GM18951 (cell line): ENCODE measurements at regions of chr11 and their contacts with region 1.

Region 1: DNA sequence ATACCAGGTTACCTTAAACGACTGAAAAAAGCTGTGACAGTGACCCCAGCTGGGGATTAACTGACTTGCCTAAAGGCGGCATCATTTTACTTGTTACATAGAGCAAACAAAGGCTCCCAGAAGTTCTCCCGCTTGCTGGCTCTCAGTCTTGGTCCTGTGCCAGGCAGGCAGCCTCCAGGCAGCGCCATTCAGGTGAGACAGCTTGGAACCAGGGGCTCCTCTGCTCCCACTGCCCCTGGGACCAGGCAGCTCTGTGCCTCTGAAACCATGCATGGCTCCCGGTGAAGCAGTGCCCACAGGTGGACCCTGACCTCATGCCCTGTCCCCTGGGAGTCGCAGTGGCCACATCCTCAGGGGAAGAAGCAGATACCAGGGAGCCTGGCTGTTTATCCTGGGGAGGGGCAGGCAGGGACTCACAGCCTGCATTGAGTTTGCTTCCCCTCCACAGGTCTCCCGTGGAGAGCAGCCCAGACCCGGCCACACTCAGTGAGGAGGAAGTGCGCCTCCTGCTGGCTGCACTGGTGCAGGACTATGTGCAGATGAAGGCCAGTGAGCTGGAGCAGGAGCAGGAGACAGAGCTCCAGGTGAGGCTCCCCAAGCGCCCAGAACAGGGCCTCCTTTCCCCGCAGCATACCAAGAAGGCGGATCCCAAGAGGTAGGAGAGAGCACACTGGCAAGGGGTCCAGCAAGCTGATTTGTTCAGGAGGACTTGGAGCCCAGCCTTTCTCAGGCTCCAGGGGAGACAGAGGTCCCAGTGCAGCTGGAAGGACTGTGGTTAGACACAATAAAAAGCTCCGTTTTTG is 15.6 kb upstream of the CYP2R1 start:
- POLR2A ChIP-seq: no peak

Region 2: DNA sequence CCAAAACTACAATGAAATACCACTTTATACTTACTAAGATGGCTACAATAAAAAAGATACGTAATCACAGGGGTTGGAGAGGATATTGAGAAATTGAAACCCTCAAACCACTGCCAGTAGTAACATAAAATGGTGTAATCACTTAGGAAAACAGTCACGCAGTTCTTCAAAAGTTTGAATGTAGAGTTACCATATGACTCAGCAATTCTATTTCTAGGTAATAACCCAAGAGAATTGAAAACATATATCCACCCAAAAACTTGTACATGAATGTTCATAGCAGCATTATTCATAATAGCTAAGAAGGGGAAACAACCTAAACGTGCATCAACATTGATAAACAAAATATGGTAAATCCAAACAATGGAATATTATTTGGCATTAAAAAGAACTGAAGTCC is 363.0 kb before region 1 on chr11:
- in situ Hi-C with region 1: loop called (anchors 10 kb)
- POLR2A ChIP-seq: no peak

Region 3: GRCh38 chr11:14789879-14790484 is 117.6 kb before region 1 on chr11:
- in situ Hi-C with region 1: loop called (anchors 5 kb)
- POLR2A ChIP-seq: no peak

Region 4: DNA sequence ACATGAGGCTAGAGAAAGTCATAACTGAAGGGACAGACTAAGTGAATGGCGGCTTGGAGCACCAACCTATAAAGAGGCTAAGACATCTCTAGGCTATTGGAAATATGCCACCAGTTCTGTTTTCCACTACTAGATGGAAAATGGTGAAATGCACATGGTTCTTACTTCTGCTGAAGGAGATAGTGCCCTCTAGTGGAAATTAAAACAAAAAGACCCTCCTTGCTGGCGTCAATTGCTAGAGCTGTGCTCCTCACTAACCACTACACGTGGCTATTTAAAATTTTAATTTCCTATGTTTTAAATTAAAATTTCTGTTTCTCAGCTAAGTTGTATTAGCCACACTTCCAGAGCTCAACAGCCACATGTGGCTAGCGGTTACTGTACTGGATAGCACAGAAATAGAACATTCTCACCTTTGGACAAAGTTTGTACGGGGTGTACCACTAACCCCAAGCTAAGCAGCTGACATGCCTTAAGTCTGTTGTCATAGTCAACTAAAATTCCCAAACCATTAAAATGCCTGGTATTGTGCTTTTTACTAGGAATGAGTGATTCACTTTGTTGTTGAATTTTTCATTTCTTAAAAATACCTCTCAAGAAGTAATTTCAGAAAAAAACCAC is 98.6 kb after region 1 on chr11:
- in situ Hi-C with region 1: no loop called
- POLR2A ChIP-seq: no peak

Region 5: DNA sequence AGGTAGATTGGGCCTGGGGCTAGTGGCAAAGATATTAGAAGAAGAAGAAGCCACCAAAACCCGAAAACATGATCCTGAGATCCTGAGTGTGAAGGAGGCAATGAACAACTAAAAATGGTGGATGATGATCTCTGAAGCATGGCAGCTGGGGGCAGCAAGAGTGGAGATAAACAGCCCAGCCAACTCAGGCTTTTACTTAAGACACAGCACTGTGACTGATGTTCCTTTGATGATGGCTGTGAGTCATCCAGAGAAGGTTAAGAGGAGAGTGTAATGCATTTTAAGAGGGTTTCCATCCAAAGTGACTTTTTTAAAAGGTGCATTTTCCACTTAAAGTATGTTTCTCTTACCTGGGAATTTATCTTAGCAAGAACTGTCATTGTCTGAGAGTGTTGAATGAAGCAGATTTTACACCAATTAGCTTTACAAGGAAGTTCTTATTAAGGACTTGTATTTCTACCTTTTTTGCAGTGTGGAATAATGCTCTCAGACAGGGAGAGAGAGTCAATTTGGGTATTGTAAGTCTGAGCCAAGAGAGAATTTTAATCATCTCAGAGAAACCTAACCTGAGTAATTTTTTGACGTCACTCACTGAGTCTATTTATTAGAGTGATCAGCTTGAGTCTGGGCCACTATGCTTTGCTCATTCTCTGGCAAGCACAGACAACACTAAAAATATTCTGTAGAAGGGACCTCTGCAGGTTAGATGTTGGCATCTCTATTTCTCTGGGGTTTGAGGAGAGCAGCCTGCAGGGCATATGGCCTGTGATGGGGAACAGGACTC is 151.7 kb after region 1 on chr11:
- in situ Hi-C with region 1: no loop called
- POLR2A ChIP-seq: no peak